ENCODE measurements at regions of chr12 and their contacts with region 1.

Region 1: GRCh38 chr12:110270125-110270962 is 10.7 kb upstream of the ATP2A2 start:
- DNase-seq: no peak
- H3K4me3 ChIP-seq: no peak overlapping the region
- H3K27ac ChIP-seq: peak overlapping the region; percentile 74 to 76
- H3K4me1 ChIP-seq: peaks cover 16 to 45% of the 10 kb centered on the region in 2 donors
- H3K27me3 ChIP-seq: no peaks in the 10 kb centered on the region
- CTCF ChIP-seq: no peak

Region 2: DNA sequence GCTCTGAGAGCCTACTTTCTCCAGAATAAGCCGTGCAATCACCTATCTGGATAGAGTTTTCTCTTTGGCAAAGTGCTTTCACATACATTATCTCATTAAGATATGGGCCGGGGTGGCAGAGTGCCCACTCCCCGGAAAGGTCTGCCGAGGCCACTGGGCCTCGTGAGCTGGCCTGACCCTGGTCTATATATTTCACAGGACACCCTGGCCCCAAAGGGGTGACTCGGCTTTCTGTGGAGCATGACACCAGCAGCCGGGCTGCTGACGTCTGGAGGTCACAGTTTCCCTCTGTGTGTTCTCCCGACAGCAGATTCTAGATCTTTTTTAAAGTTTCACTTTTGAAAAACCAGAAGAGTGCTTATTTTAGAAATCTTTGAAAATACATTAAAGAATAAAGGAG is 17.2 kb before region 1 on chr12:
- intact Hi-C with region 1: loop called (anchors 2 kb)
- DNase-seq: peak; percentile 57 to 80
- H3K4me3 ChIP-seq: peak overlapping the region; percentile 28 to 40
- H3K27ac ChIP-seq: peak overlapping the region; percentile 60 to 70
- H3K4me1 ChIP-seq: peaks cover 13 to 24% of the 10 kb centered on the region in 2 donors
- H3K27me3 ChIP-seq: no peaks in the 10 kb centered on the region
- CTCF ChIP-seq: no peak